ENCODE measurements at regions of chr11 and their contacts with region 1.

Region 1: GRCh38 chr11:91373497-91373896 is 851.1 kb upstream of the FAT3 start:
- DNase-seq: no peak
- H3K4me3 ChIP-seq: no peak overlapping the region
- H3K27ac ChIP-seq: no peak overlapping the region
- H3K4me1 ChIP-seq: no peaks in the 10 kb centered on the region
- H3K27me3 ChIP-seq: no peaks in the 10 kb centered on the region
- CTCF ChIP-seq: no peak
- POLR2A ChIP-seq: no peak

Region 2: GRCh38 chr11:91596111-91596510 is 222.6 kb after region 1 on chr11:
- intact Hi-C with region 1: no loop called
- DNase-seq: no peak
- H3K4me3 ChIP-seq: no peak overlapping the region
- H3K27ac ChIP-seq: no peak overlapping the region
- H3K4me1 ChIP-seq: no peaks in the 10 kb centered on the region
- H3K27me3 ChIP-seq: no peaks in the 10 kb centered on the region
- CTCF ChIP-seq: no peak
- POLR2A ChIP-seq: no peak

Region 3: GRCh38 chr11:92269021-92269420 is 895.5 kb after region 1 on chr11:
- intact Hi-C with region 1: loop called (anchors 5 kb)
- DNase-seq: no peak
- H3K4me3 ChIP-seq: no peak overlapping the region
- H3K27ac ChIP-seq: no peak overlapping the region
- H3K4me1 ChIP-seq: no peaks in the 10 kb centered on the region
- H3K27me3 ChIP-seq: no peaks in the 10 kb centered on the region
- CTCF ChIP-seq: no peak
- POLR2A ChIP-seq: no peak

Measured in breast epithelium (tissue), 4 donors.